SK-N-SH (cell line): ENCODE measurements at regions of chr15 and their contacts with region 1.

Region 1: GRCh38 chr15:78241007-78241406 is 6.6 kb upstream of the ACSBG1 start:
- DNase-seq: peak; percentile 93
- H3K4me3 ChIP-seq: peak overlapping the region in 1 of 2 experiments; percentile 35; a peak in 1 of 4 replicates
- H3K27ac ChIP-seq: no peak overlapping the region
- H3K4me1 ChIP-seq: peaks cover 0 to 12% of the 10 kb centered on the region in 2 experiments; a peak in 1 of 4 replicates
- H3K27me3 ChIP-seq: peaks cover 5% of the 10 kb centered on the region; the same call in 1 of the 2 replicates
- CTCF ChIP-seq: peak; percentile 88
- EP300 ChIP-seq: peak in 1 of 2 experiments; percentile 13; a peak in 1 of 4 replicates
- RAD21 ChIP-seq: peak; percentile 95

Region 2: DNA sequence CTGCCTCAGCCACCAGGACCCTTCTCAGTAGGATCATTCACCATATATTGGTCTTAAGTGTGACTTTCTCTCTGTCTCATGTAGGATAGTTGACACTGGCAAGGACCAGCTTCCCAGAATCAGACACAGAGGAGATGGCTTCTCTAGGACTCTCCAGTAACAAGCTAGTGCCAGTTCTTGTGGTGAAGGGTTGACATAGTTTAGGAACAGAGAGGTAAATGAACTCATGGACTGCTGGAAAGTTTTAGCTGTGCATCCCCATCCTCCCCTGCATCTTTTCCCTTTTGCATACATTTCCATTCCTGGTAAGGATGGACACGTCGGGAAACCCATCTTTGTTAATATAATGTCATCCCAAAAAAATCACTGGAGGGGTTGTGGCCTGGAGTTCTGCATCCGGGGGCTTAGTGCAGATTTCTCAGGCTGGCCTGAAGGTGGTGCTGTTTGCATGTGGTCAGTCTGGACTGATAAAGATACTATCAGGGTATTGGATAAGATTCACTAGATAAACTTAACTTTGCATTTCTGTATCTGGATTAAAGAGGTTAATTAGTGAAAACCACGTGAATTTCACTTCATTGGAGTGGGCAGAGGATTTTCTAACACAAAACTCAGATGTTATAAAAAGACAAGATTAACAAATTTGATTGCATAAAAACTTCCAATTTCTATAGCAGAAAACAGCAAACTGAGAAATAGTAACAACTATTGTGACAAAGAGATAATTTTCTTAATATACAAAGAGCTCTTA is 274.3 kb before region 1 on chr15:
- CTCF ChIA-PET with region 1: interaction called, 40 read pairs
- POLR2A ChIA-PET with region 1: no interaction called
- DNase-seq: peak; percentile 78
- H3K4me3 ChIP-seq: no peak overlapping the region; a peak in 1 of 4 replicates
- H3K27ac ChIP-seq: no peak overlapping the region
- H3K4me1 ChIP-seq: no peaks in the 10 kb centered on the region; a peak in 1 of 4 replicates
- H3K27me3 ChIP-seq: no peaks in the 10 kb centered on the region; the same call in 1 of the 2 replicates
- CTCF ChIP-seq: peak; percentile 94
- EP300 ChIP-seq: no peak
- RAD21 ChIP-seq: peak; percentile 96

Region 3: DNA sequence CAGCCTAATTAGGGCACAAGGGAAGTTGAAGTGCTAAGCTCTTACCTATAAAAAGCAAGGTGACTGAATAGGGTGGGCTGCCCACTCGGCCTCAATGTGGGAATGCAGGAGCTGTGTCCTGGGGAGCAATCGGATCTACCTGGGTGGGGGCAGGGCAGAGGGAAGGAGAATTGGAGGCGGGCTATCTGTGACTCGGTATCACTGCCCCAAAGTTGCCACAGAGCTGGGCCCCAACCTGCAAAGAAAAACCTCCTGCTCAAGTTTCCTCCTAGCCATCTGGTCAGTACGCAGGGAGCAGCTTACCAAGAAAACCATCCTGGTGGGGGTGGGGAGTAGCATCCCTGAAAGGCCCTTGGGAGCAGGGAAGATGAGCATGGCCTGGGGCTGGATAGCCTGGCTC is 120.5 kb before region 1 on chr15:
- CTCF ChIA-PET with region 1: interaction called, 168 read pairs
- POLR2A ChIA-PET with region 1: no interaction called
- DNase-seq: no peak
- H3K4me3 ChIP-seq: no peak overlapping the region
- H3K27ac ChIP-seq: no peak overlapping the region
- H3K4me1 ChIP-seq: no peaks in the 10 kb centered on the region
- H3K27me3 ChIP-seq: no peaks in the 10 kb centered on the region
- CTCF ChIP-seq: no peak
- EP300 ChIP-seq: no peak
- RAD21 ChIP-seq: no peak

Region 4: DNA sequence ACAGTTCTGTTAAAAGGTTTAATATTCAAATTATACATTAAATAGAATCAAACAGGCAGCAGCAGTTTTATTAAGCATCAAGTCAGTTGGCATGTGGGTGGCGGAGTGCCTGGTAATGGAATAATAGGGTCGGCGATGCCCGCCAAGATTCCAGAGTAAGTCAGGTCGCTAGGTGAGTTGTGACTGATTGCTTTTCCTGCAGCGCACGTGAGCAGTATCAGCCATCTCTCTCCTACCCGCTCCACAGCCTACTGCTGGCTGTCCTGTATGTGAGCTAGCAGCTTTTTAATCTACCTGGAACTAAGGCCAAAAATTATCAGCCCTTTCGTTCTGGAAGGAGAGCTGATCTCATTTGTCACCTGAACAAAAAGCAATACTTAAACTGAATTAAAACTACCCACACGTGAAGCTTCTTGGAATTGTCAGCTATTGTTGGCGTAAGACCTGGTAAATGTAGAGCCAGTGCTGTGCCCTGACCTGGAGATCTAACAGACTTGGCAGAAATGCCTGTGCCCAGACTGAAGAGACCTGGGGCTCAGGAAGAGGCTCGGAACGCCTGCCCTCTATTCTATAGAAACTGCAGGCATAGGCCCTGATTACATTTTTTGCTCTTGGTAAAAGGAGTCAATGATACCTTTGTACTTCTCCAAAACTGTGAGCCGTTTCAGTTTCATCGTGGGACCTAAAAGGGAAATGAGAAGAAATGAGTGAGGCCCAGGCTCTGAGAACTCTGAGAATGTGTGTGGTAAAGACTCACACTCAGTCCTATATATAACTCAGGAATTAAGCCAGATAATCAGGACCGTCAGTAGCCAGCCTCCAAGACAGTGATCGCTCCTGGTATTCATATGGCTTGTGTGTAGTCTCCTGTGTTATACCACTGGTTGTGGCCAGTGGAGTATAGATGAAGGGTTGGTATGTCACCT is 69.9 kb before region 1 on chr15:
- CTCF ChIA-PET with region 1: interaction called, 71 read pairs
- POLR2A ChIA-PET with region 1: no interaction called
- DNase-seq: no peak
- H3K4me3 ChIP-seq: no peak overlapping the region
- H3K27ac ChIP-seq: no peak overlapping the region
- H3K4me1 ChIP-seq: no peaks in the 10 kb centered on the region
- H3K27me3 ChIP-seq: no peaks in the 10 kb centered on the region
- CTCF ChIP-seq: no peak
- EP300 ChIP-seq: no peak
- RAD21 ChIP-seq: no peak

Region 5: DNA sequence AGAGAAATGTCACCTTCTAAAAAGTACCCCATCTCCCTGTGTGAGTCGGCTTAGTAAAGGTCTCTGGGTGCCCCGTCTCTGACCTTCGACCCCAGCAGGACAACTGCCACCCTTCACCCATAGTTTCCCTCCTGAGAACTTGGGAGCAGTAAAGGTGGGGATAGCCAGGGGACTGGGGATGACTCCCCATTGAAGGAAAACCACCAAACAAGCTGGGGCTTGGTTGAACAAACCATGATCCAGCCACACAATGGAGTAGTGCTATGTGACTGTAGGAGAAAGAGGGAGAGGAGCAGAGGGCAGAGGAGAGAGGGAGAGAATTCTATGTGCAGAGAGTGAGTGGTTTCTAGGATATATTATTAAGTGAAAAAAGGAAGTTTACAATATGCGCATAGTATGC is 58.2 kb before region 1 on chr15:
- CTCF ChIA-PET with region 1: interaction called, 71 read pairs
- POLR2A ChIA-PET with region 1: no interaction called
- DNase-seq: no peak
- H3K4me3 ChIP-seq: no peak overlapping the region
- H3K27ac ChIP-seq: no peak overlapping the region
- H3K4me1 ChIP-seq: no peaks in the 10 kb centered on the region
- H3K27me3 ChIP-seq: no peaks in the 10 kb centered on the region
- CTCF ChIP-seq: no peak
- EP300 ChIP-seq: no peak
- RAD21 ChIP-seq: no peak

Region 6: DNA sequence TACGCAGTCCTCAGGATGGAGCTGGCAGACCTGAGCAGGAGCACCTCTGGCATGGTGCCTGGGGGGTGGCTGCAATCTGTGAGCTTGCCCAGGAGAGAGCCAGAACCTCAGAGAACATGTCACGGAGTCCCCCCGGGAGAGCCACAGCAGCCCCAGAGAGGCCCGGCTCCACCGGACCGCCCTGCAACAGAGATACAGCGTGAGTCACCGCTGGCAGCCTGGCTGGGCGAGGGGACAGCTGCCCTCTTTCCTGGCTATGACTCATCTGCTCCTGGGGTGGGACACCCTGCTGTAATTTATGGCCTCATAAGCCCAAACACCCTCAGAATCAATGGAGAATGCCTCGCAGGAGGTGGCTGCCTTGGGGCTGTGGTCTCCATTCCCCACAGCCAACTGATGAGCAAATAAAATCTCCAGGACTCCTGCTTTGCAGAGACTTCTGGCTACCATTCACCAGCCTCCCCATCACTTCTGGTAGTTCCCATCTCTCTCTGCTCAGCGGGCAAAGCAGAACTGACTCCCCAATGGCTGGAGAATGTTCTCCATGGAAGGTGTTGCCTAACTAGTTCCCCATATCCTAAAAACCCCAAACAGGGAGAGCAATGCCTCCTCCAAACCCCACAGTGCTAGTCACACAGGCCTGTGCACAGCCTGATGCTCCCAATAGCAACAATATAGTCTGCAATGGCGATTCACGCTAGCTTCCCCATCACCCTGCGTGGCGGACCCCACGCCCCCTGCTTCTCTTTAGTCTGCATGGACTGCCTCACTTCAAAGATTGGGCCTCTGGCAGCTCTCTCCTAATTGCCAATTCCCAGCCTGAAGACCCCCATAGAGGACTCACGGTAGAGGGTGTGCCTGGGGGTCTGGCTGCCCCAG is 28.2 kb before region 1 on chr15:
- CTCF ChIA-PET with region 1: interaction called, 22 read pairs
- POLR2A ChIA-PET with region 1: no interaction called
- DNase-seq: peak; percentile 58
- H3K4me3 ChIP-seq: no peak overlapping the region; a peak in 1 of 4 replicates
- H3K27ac ChIP-seq: peak overlapping the region in 1 of 2 experiments; percentile 11; a peak in 1 of 4 replicates
- H3K4me1 ChIP-seq: peaks cover 20 to 32% of the 10 kb centered on the region in 2 experiments; a peak in 3 of 4 replicates
- H3K27me3 ChIP-seq: no peaks in the 10 kb centered on the region
- CTCF ChIP-seq: no peak
- EP300 ChIP-seq: peak in 1 of 2 experiments; percentile 79; a peak in 2 of 4 replicates
- RAD21 ChIP-seq: no peak

Region 7: DNA sequence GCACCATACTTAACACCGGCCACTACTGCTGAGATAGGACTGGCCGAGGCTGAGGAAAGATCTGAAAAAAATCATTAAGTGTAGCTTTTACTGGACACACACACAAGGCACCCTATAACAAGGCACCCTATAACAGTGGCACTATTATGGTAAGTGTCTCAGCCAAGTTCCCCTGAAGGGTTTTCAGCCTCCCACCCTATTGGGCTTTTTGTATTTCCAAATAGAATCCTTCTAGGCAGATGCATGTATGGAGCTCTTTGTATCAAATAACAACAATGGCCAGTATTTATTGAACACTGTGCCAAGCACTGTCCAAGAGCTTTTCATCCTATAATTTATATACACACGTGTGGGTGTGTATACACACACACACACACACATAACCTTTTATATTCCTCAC is 16.7 kb after region 1 on chr15:
- CTCF ChIA-PET with region 1: interaction called, 32 read pairs
- POLR2A ChIA-PET with region 1: no interaction called
- DNase-seq: no peak
- H3K4me3 ChIP-seq: no peak overlapping the region
- H3K27ac ChIP-seq: no peak overlapping the region
- H3K4me1 ChIP-seq: no peaks in the 10 kb centered on the region
- H3K27me3 ChIP-seq: no peaks in the 10 kb centered on the region
- CTCF ChIP-seq: no peak
- EP300 ChIP-seq: no peak
- RAD21 ChIP-seq: no peak

Region 8: DNA sequence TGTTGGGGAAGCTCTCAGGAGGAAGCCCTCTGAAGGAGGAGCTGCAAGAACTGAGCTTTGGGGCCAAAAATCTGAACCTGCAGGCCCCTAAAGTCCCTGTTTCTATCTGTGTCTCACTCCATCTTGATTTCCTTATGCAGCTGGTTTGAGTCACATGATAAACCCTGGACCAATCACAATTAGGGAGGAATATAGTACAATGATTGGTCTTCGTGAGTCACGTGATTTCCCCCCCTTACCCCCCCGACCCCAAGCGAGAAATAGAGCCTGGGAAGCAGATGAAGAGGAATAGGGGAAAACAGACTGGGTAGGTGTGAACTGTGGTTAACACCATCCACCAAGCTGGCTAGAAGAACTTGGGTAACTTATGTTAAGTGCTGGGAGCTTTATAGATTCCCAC is 112.1 kb after region 1 on chr15:
- CTCF ChIA-PET with region 1: no interaction called
- POLR2A ChIA-PET with region 1: no interaction called
- DNase-seq: peak; percentile 55
- H3K4me3 ChIP-seq: no peak overlapping the region
- H3K27ac ChIP-seq: no peak overlapping the region
- H3K4me1 ChIP-seq: peaks cover 0 to 6% of the 10 kb centered on the region in 2 experiments; a peak in 1 of 4 replicates
- H3K27me3 ChIP-seq: no peaks in the 10 kb centered on the region; the same call in 1 of the 2 replicates
- CTCF ChIP-seq: no peak
- EP300 ChIP-seq: no peak
- RAD21 ChIP-seq: no peak

Region 9: DNA sequence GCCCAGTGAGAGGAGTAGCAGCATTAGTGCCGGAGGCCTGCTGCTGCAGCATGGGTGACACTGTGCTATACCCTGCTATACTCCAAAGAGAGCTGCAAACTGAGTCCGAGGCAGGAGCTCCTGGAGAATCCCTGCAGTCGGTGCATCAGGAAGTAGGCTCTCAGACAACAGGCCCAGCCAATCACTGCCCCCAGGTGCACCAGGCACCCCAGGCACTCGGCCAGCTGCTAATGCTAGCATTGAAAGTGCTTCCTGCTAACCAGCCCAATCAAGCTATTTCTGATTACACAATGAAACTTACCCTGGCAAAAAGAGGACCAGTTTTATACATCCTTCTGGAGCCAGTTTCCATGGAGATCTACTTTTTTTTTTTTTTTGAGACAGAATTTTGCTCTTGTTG is 151.4 kb after region 1 on chr15:
- CTCF ChIA-PET with region 1: no interaction called
- POLR2A ChIA-PET with region 1: no interaction called
- DNase-seq: peak; percentile 73
- H3K4me3 ChIP-seq: no peak overlapping the region
- H3K27ac ChIP-seq: peak overlapping the region in 1 of 2 experiments; percentile 77; a peak in 2 of 4 replicates
- H3K4me1 ChIP-seq: peaks cover 0 to 19% of the 10 kb centered on the region in 2 experiments; a peak in 1 of 4 replicates
- H3K27me3 ChIP-seq: no peaks in the 10 kb centered on the region
- CTCF ChIP-seq: no peak
- EP300 ChIP-seq: peak in 1 of 2 experiments; percentile 12; a peak in 1 of 4 replicates
- RAD21 ChIP-seq: no peak

Region 10: GRCh38 chr15:78795670-78796069 is 554.7 kb after region 1 on chr15:
- CTCF ChIA-PET with region 1: no interaction called
- POLR2A ChIA-PET with region 1: no interaction called
- DNase-seq: no peak
- H3K4me3 ChIP-seq: no peak overlapping the region
- H3K27ac ChIP-seq: no peak overlapping the region
- H3K4me1 ChIP-seq: peaks cover 0 to 6% of the 10 kb centered on the region in 2 experiments; a peak in 1 of 4 replicates
- H3K27me3 ChIP-seq: no peaks in the 10 kb centered on the region
- CTCF ChIP-seq: no peak
- EP300 ChIP-seq: no peak
- RAD21 ChIP-seq: no peak